ENCODE measurements at regions of chr2 and their contacts with region 1.

Region 1: GRCh38 chr2:174634130-174635014 is 36.8 kb upstream of the WIPF1 start:
- DNase-seq: peak; percentile 86
- H3K4me3 Mint-ChIP-seq: peak overlapping the region; percentile 90
- H3K27ac Mint-ChIP-seq: peak overlapping the region; percentile 95
- H3K4me1 Mint-ChIP-seq: peaks cover 71% of the 10 kb centered on the region
- H3K27me3 Mint-ChIP-seq: no peaks in the 10 kb centered on the region

Region 2: GRCh38 chr2:174593574-174594203 is 40.7 kb before region 1 on chr2:
- intact Hi-C with region 1: loop called (anchors 1 kb)
- DNase-seq: peak; percentile 92
- H3K4me3 Mint-ChIP-seq: peak overlapping the region; percentile 86
- H3K27ac Mint-ChIP-seq: peak overlapping the region; percentile 98
- H3K4me1 Mint-ChIP-seq: peaks cover 53% of the 10 kb centered on the region
- H3K27me3 Mint-ChIP-seq: no peaks in the 10 kb centered on the region

Region 3: GRCh38 chr2:174615871-174616436 is 18.4 kb before region 1 on chr2:
- intact Hi-C with region 1: loop called (anchors 1 kb)
- DNase-seq: peak; percentile 73
- H3K4me3 Mint-ChIP-seq: peak overlapping the region; percentile 49
- H3K27ac Mint-ChIP-seq: peak overlapping the region; percentile 90
- H3K4me1 Mint-ChIP-seq: peaks cover 72% of the 10 kb centered on the region
- H3K27me3 Mint-ChIP-seq: no peaks in the 10 kb centered on the region

Region 4: DNA sequence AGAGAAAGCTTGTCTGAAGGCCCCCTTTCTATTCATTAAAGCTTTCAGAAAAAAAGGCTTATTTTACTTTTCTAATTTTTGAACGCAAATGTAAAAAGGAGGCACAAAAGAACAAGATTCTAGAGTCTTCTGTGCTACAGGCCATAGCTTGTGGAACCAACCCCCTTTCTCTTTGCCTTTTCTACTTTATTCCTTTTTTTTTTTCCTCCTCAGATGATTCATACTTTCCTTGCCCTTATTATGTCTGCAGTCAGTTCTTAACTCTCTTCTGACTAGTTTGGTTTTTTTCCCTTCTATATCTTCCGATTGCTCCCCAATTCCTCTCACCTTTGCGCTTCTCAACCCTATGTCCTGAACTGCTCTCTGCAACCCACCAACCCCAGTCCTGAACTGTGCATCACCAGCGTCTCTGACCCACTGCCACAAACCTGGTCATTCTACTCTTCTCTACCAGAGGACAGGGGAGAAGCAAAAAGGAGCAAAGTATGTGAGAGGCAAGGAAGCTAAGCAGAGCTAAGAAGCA is 20.1 kb after region 1 on chr2:
- intact Hi-C with region 1: loop called (anchors 2 kb)
- DNase-seq: no peak
- H3K4me3 Mint-ChIP-seq: no peak overlapping the region
- H3K27ac Mint-ChIP-seq: peak overlapping the region; percentile 31
- H3K4me1 Mint-ChIP-seq: peaks cover 36% of the 10 kb centered on the region
- H3K27me3 Mint-ChIP-seq: no peaks in the 10 kb centered on the region

Region 5: GRCh38 chr2:174835797-174836255 is 201.5 kb after region 1 on chr2:
- intact Hi-C with region 1: loop called (anchors 5 kb)
- DNase-seq: peak; percentile 60
- H3K4me3 Mint-ChIP-seq: peak overlapping the region; percentile 72
- H3K27ac Mint-ChIP-seq: peak overlapping the region; percentile 99
- H3K4me1 Mint-ChIP-seq: peaks cover 30% of the 10 kb centered on the region
- H3K27me3 Mint-ChIP-seq: no peaks in the 10 kb centered on the region

Measured in activated CD4-positive, alpha-beta T cell treated with anti-CD3 and anti-CD28 coated beads, Interleukin-2, amount 10 ng/mL, durations not matched to agents 24 days and 14 days (primary cell).